ENCODE measurements at regions of chr20 and their contacts with region 1.

Region 1: GRCh38 chr20:3115190-3116107 is 30.9 kb upstream of the AVP start:
- DNase-seq: peak in 5 of 9 experiments; percentile 18 to 70 (median 60)
- ATAC-seq: peak; percentile 77
- H3K4me3 ChIP-seq: no peak overlapping the region
- H3K4me3 Mint-ChIP-seq: no peak overlapping the region
- H3K27ac ChIP-seq: no peak overlapping the region
- H3K27ac Mint-ChIP-seq: peak overlapping the region; percentile 69
- H3K4me1 ChIP-seq: peaks cover 7% of the 10 kb centered on the region
- H3K4me1 Mint-ChIP-seq: peaks cover 23% of the 10 kb centered on the region
- H3K27me3 ChIP-seq: no peaks in the 10 kb centered on the region
- H3K27me3 Mint-ChIP-seq: no peaks in the 10 kb centered on the region
- CTCF ChIP-seq: peak; percentile 95

Region 2: GRCh38 chr20:2932498-2932897 is 183.0 kb before region 1 on chr20:
- CTCF ChIA-PET with region 1: no interaction called
- POLR2A ChIA-PET with region 1: no interaction called
- intact Hi-C with region 1: no loop called
- DNase-seq: no peak
- ATAC-seq: no peak
- H3K4me3 ChIP-seq: no peak overlapping the region
- H3K4me3 Mint-ChIP-seq: no peak overlapping the region
- H3K27ac ChIP-seq: no peak overlapping the region
- H3K27ac Mint-ChIP-seq: no peak overlapping the region
- H3K4me1 ChIP-seq: no peaks in the 10 kb centered on the region
- H3K4me1 Mint-ChIP-seq: peaks cover 4% of the 10 kb centered on the region
- H3K27me3 ChIP-seq: no peaks in the 10 kb centered on the region
- H3K27me3 Mint-ChIP-seq: no peaks in the 10 kb centered on the region
- CTCF ChIP-seq: no peak

Region 3: DNA sequence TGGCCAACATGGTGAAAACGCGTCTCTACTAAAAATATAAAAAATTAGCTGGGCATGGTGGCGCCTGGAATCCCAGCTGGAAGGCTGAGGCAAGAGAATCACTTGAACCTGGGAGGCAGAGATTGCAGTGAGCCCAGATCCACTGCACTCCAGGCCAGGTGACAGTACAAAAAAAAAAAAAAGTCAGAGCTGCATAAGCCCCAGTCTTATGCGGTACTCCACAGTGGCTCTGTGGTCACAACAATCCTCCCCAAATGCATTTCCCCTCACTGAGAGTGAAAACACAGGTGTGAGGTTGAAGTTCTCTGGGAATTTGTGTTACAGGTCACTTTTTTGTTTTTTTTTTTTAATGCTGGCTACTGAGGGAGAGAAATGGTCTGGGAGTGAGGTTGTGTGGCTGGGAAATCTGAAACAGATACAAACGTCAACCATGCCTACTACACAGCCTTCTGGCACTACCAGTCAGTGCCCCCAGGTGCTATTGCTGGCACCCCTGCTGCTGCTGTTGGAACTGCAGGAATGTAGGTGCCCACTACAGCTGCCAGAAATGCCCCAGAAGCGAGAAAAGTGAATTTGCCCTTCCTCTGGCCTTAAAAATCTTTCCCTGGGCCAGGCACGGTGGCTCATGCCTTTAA is 63.9 kb before region 1 on chr20:
- CTCF ChIA-PET with region 1: interaction called, 35 read pairs
- POLR2A ChIA-PET with region 1: no interaction called
- intact Hi-C with region 1: loop called (anchors 1 kb)
- DNase-seq: peak in 1 of 9 experiments; percentile 35
- ATAC-seq: peak; percentile 58
- H3K4me3 ChIP-seq: no peak overlapping the region
- H3K4me3 Mint-ChIP-seq: no peak overlapping the region
- H3K27ac ChIP-seq: no peak overlapping the region
- H3K27ac Mint-ChIP-seq: no peak overlapping the region
- H3K4me1 ChIP-seq: peaks cover 9% of the 10 kb centered on the region
- H3K4me1 Mint-ChIP-seq: peaks cover 18% of the 10 kb centered on the region
- H3K27me3 ChIP-seq: no peaks in the 10 kb centered on the region
- H3K27me3 Mint-ChIP-seq: no peaks in the 10 kb centered on the region
- CTCF ChIP-seq: no peak

Region 4: GRCh38 chr20:3068986-3069900 is 46.2 kb before region 1 on chr20:
- CTCF ChIA-PET with region 1: interaction called, 32 read pairs
- POLR2A ChIA-PET with region 1: no interaction called
- intact Hi-C with region 1: loop called (anchors 1 kb)
- DNase-seq: peak in 6 of 9 experiments; percentile 45 to 73 (median 64)
- ATAC-seq: peak; percentile 59
- H3K4me3 ChIP-seq: no peak overlapping the region
- H3K4me3 Mint-ChIP-seq: no peak overlapping the region
- H3K27ac ChIP-seq: no peak overlapping the region
- H3K27ac Mint-ChIP-seq: no peak overlapping the region
- H3K4me1 ChIP-seq: peaks cover 13% of the 10 kb centered on the region
- H3K4me1 Mint-ChIP-seq: peaks cover 24% of the 10 kb centered on the region
- H3K27me3 ChIP-seq: no peaks in the 10 kb centered on the region
- H3K27me3 Mint-ChIP-seq: no peaks in the 10 kb centered on the region
- CTCF ChIP-seq: peak; percentile 41

Region 5: GRCh38 chr20:3156811-3157619 is 41.6 kb after region 1 on chr20:
- CTCF ChIA-PET with region 1: interaction called, 11 read pairs
- POLR2A ChIA-PET with region 1: interaction called, 4 read pairs
- intact Hi-C with region 1: loop called (anchors 1 to 5 kb)
- DNase-seq: peak in 1 of 9 experiments; percentile 60
- ATAC-seq: peak; percentile 80
- H3K4me3 ChIP-seq: peak overlapping the region in 1 of 2 experiments; percentile 12
- H3K4me3 Mint-ChIP-seq: peak overlapping the region; percentile 60
- H3K27ac ChIP-seq: peak overlapping the region in 1 of 2 experiments; percentile 58
- H3K27ac Mint-ChIP-seq: peak overlapping the region; percentile 90
- H3K4me1 ChIP-seq: peaks cover 43% of the 10 kb centered on the region
- H3K4me1 Mint-ChIP-seq: peaks cover 60% of the 10 kb centered on the region
- H3K27me3 ChIP-seq: no peaks in the 10 kb centered on the region
- H3K27me3 Mint-ChIP-seq: no peaks in the 10 kb centered on the region
- CTCF ChIP-seq: no peak

Region 6: DNA sequence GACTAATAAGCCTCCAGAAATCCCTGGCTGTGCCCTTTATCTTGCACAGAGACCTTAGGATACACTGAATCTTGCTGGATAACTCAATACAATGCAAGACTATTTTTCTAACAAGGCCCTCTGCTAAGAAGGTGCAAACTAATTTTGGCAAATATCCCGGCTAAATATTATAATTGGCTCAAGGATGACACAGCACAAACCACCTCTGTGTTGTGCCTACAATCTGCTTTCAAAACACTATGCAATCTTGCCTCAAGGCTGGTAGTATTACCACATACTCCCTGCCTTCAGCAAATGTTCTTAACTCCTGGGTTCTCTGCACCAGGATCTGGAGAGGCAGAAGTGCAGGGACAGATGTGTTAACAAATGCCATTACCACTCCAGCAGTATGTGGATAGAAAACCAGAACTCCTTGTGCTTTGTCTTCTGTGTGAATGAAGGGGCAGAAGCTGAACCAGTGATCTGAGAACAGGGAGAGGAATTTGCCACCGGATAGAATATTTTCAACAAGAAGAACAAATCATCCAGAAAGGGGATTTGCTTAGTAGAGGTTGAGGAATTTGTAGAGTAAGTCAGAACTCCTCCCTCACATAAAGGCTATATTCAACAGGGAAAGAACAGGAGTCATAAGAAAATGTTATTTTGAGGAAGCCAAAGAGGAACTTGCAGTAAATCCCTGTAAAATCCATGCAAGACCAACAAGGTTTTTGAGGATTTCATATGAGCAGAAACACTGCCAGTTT is 197.7 kb after region 1 on chr20:
- CTCF ChIA-PET with region 1: interaction called, 4 read pairs
- POLR2A ChIA-PET with region 1: no interaction called
- intact Hi-C with region 1: loop called (anchors 1 to 2 kb)
- DNase-seq: no peak
- ATAC-seq: no peak
- H3K4me3 ChIP-seq: no peak overlapping the region
- H3K4me3 Mint-ChIP-seq: no peak overlapping the region
- H3K27ac ChIP-seq: no peak overlapping the region
- H3K27ac Mint-ChIP-seq: peak overlapping the region; percentile 41
- H3K4me1 ChIP-seq: no peaks in the 10 kb centered on the region
- H3K4me1 Mint-ChIP-seq: peaks cover 2% of the 10 kb centered on the region
- H3K27me3 ChIP-seq: no peaks in the 10 kb centered on the region
- H3K27me3 Mint-ChIP-seq: no peaks in the 10 kb centered on the region
- CTCF ChIP-seq: no peak